ENCODE measurements at regions of chr10 and their contacts with region 1.

Region 1: DNA sequence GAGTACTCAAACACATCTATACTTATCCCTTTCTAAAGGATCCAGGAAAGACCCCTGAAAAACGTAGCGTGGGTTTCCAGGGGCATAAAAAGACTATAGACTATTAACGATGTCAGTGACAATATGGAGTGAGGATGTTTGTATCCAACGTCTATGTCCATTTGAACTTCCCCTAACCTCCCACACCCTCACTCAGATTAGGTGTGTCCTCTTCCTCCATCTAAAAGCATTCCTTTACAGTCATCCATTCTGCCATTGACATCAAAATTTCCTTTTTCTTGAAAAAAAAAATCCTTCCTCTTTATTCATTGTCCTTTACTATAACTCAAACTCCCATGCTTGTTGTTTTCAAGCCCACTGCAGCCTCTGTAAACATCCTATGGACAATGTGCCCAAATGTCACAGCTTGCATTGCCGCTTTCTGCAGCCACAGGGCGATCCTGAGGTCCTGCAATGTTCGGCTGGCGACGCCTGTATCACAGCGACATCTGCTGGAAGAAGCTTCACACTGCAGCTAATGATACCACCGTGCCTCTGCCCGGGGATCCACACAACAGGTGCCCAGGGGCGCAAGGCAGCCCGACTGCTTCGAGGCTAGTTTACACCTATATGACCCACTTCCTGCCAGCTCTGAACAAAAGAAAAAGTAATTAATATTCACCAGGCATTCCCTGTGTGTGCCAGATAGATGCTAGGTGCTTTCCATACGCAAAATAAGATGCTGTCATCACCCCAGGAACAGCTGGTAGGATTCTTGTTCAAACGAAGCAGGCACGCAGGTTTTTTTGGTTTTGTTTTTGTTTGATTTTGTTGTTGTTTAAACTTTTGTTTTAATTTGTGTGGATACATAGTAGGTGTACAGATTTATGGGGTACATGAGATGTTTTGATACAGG is 267.9 kb upstream of the GHITM start:
- DNase-seq: peak; percentile 66 to 78
- H3K4me3 ChIP-seq: no peak overlapping the region
- H3K4me3 Mint-ChIP-seq: no peak overlapping the region
- H3K27ac Mint-ChIP-seq: no peak overlapping the region
- H3K4me1 ChIP-seq: no peaks in the 10 kb centered on the region
- H3K4me1 Mint-ChIP-seq: no peaks in the 10 kb centered on the region
- H3K27me3 ChIP-seq: no peaks in the 10 kb centered on the region
- H3K27me3 Mint-ChIP-seq: peaks cover 13% of the 10 kb centered on the region
- CTCF ChIP-seq: peak; percentile 95

Region 2: DNA sequence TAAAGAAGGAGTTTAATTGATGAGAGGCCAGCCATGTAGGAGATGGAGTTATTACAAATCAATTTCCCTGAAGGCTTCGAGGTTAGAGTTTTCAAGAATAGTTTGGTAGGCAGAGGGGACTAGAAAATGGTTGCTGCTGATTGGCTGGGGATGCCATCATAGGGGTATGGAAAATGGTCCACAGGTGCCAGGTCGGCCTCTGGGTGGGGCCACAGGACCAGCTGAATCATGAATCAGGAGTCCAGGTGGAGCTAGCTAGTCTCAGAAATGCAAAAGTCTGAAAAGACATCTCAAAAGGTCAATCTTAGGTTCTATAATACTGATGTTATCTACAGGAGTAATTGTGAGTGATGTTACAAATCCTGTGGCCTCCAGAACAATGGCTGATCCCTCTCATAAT is 446.1 kb before region 1 on chr10:
- CTCF ChIA-PET with region 1: interaction called, 7 read pairs
- POLR2A ChIA-PET with region 1: no interaction called
- intact Hi-C with region 1: loop called (anchors 1 kb)
- DNase-seq: peak in 1 of 2 experiments; percentile 29
- H3K4me3 ChIP-seq: no peak overlapping the region
- H3K4me3 Mint-ChIP-seq: no peak overlapping the region
- H3K27ac Mint-ChIP-seq: no peak overlapping the region
- H3K4me1 ChIP-seq: no peaks in the 10 kb centered on the region
- H3K4me1 Mint-ChIP-seq: peaks cover 14% of the 10 kb centered on the region
- H3K27me3 ChIP-seq: no peaks in the 10 kb centered on the region
- H3K27me3 Mint-ChIP-seq: no peaks in the 10 kb centered on the region
- CTCF ChIP-seq: no peak

Region 3: DNA sequence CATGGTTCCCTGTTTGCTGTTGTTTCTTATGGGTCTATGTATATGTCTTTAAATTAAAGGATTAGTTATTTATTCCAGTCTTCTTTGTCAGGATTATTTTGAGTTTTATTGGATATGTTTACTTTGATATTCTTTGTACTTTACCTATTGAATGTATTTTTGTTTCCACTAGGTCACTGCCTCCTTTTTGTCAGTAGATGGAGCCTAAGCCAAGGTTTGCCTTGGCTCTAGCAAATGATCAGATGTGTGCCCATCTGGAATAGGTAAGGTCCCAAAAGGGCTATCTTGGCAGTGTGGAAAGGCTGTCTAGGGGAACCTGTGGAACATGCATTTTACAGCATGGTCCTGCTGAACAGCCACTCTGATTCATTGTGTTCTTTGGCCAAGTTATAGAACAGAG is 69.5 kb before region 1 on chr10:
- CTCF ChIA-PET with region 1: interaction called, 5 read pairs
- POLR2A ChIA-PET with region 1: no interaction called
- intact Hi-C with region 1: loop called (anchors 1 kb)
- DNase-seq: no peak
- H3K4me3 ChIP-seq: no peak overlapping the region
- H3K4me3 Mint-ChIP-seq: no peak overlapping the region
- H3K27ac Mint-ChIP-seq: no peak overlapping the region
- H3K4me1 ChIP-seq: no peaks in the 10 kb centered on the region
- H3K4me1 Mint-ChIP-seq: no peaks in the 10 kb centered on the region
- H3K27me3 ChIP-seq: no peaks in the 10 kb centered on the region
- H3K27me3 Mint-ChIP-seq: peaks cover 2% of the 10 kb centered on the region
- CTCF ChIP-seq: peak in 1 of 2 experiments; percentile 37

Region 4: DNA sequence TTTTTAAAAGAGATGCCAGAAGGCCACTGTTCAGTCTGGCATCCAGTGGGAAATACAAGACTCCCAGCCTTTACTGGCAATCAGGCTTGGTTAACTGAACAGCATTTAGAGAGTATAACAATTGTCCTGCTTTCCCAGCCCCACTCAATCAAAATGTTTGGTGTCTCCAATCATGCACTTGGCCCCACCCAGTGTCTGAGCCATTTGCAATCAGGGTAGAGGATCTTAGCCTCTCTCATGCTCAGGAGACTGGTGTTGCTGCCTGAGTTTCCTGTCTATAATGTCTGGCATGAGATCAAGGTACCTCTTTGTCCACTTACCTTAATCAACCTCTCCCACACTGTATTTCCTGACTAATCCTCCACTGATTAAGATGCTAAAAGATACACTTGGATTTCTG is 22.3 kb before region 1 on chr10:
- CTCF ChIA-PET with region 1: no interaction called
- POLR2A ChIA-PET with region 1: no interaction called
- intact Hi-C with region 1: no loop called
- DNase-seq: no peak
- H3K4me3 ChIP-seq: no peak overlapping the region
- H3K4me3 Mint-ChIP-seq: no peak overlapping the region
- H3K27ac Mint-ChIP-seq: no peak overlapping the region
- H3K4me1 ChIP-seq: no peaks in the 10 kb centered on the region
- H3K4me1 Mint-ChIP-seq: no peaks in the 10 kb centered on the region
- H3K27me3 ChIP-seq: no peaks in the 10 kb centered on the region
- H3K27me3 Mint-ChIP-seq: no peaks in the 10 kb centered on the region
- CTCF ChIP-seq: no peak

Region 5: GRCh38 chr10:84026544-84027257 is 155.3 kb after region 1 on chr10:
- CTCF ChIA-PET with region 1: interaction called, 13 read pairs
- POLR2A ChIA-PET with region 1: no interaction called
- intact Hi-C with region 1: no loop called
- DNase-seq: peak in 1 of 2 experiments; percentile 41
- H3K4me3 ChIP-seq: no peak overlapping the region
- H3K4me3 Mint-ChIP-seq: no peak overlapping the region
- H3K27ac Mint-ChIP-seq: no peak overlapping the region
- H3K4me1 ChIP-seq: no peaks in the 10 kb centered on the region
- H3K4me1 Mint-ChIP-seq: no peaks in the 10 kb centered on the region
- H3K27me3 ChIP-seq: no peaks in the 10 kb centered on the region
- H3K27me3 Mint-ChIP-seq: no peaks in the 10 kb centered on the region
- CTCF ChIP-seq: peak; percentile 68 to 86

Region 6: GRCh38 chr10:84097787-84098353 is 226.4 kb after region 1 on chr10:
- CTCF ChIA-PET with region 1: no interaction called
- POLR2A ChIA-PET with region 1: no interaction called
- intact Hi-C with region 1: loop called (anchors 5 kb)
- DNase-seq: no peak
- H3K4me3 ChIP-seq: no peak overlapping the region
- H3K4me3 Mint-ChIP-seq: no peak overlapping the region
- H3K27ac Mint-ChIP-seq: no peak overlapping the region
- H3K4me1 ChIP-seq: no peaks in the 10 kb centered on the region
- H3K4me1 Mint-ChIP-seq: no peaks in the 10 kb centered on the region
- H3K27me3 ChIP-seq: no peaks in the 10 kb centered on the region
- H3K27me3 Mint-ChIP-seq: peaks cover 11% of the 10 kb centered on the region
- CTCF ChIP-seq: peak; percentile 47 to 70

Measured in Caco-2 (cell line).